ENCODE measurements at regions of chr14 and their contacts with region 1.

Region 1: DNA sequence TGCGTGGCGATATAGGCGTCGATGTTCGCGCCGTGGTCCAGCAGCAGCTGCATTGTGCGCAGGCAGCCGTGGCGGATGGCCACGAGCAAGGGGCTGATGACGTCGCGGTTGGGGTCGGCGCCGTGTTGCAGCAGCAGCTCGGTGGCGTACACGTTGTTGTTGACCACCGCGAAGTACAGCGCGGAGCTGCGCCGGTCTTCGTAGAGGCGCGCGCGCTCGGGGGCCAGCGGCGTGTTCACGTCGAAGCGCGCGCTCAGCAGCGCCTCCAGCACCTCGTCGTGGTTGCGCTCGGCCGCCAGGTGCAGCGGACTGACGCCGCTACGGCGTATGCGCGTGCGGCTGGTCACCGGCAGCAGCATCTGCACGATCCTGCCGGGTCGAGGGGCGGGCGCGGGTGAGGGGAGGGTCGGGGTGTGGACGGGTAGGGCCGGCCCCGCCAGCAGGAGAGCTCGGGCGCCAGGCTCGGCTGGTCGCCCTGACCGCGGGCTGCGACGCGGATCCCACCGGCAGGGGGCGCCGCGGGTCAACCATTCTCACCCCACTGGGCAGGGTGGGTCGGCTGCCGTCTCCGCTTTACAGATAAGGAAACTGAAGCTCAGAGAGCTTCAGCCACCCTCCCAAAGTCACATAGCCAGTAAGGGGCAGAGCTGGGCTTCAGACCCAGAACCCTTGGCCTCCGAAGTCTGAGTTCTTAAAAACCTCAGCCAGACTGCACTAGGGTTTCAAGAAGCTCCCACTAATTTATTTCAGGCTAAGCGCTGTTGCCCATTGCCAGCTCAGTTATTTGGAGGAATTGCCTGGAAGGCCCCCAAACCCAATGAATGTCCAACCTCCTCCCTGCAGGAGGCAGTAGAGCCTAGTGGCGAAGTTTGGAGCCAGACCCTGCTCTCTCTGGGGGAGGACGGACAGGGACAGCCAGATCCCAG is 12.4 kb downstream of the FAM181A start:
- DNase-seq: peak; percentile 92
- H3K4me3 Mint-ChIP-seq: peak overlapping the region; percentile 52
- H3K27ac Mint-ChIP-seq: peak overlapping the region; percentile 68
- H3K4me1 Mint-ChIP-seq: peaks cover 36% of the 10 kb centered on the region
- H3K27me3 Mint-ChIP-seq: no peaks in the 10 kb centered on the region

Region 2: GRCh38 chr14:93888995-93889394 is 50.6 kb before region 1 on chr14:
- CTCF ChIA-PET with region 1: no interaction called
- POLR2A ChIA-PET with region 1: no interaction called
- DNase-seq: no peak
- H3K4me3 Mint-ChIP-seq: no peak overlapping the region
- H3K27ac Mint-ChIP-seq: no peak overlapping the region
- H3K4me1 Mint-ChIP-seq: peaks cover 9% of the 10 kb centered on the region
- H3K27me3 Mint-ChIP-seq: peaks cover 40% of the 10 kb centered on the region

Region 3: GRCh38 chr14:93959239-93960107 is 19.9 kb after region 1 on chr14:
- CTCF ChIA-PET with region 1: interaction called, 88 read pairs
- POLR2A ChIA-PET with region 1: interaction called, 39 read pairs
- DNase-seq: peak; percentile 96
- H3K4me3 Mint-ChIP-seq: peak overlapping the region; percentile 75
- H3K27ac Mint-ChIP-seq: peak overlapping the region; percentile 99
- H3K4me1 Mint-ChIP-seq: peaks cover 96% of the 10 kb centered on the region
- H3K27me3 Mint-ChIP-seq: no peaks in the 10 kb centered on the region

Region 4: GRCh38 chr14:93984987-93985410 is 45.4 kb after region 1 on chr14:
- CTCF ChIA-PET with region 1: interaction called, 354 read pairs
- POLR2A ChIA-PET with region 1: interaction called, 3 read pairs
- DNase-seq: no peak
- H3K4me3 Mint-ChIP-seq: no peak overlapping the region
- H3K27ac Mint-ChIP-seq: no peak overlapping the region
- H3K4me1 Mint-ChIP-seq: peaks cover 5% of the 10 kb centered on the region
- H3K27me3 Mint-ChIP-seq: no peaks in the 10 kb centered on the region

Region 5: GRCh38 chr14:94009767-94010166 is 70.2 kb after region 1 on chr14:
- CTCF ChIA-PET with region 1: interaction called, 300 read pairs
- POLR2A ChIA-PET with region 1: interaction called, 5 read pairs
- DNase-seq: no peak
- H3K4me3 Mint-ChIP-seq: no peak overlapping the region
- H3K27ac Mint-ChIP-seq: peak overlapping the region; percentile 61
- H3K4me1 Mint-ChIP-seq: peaks cover 69% of the 10 kb centered on the region
- H3K27me3 Mint-ChIP-seq: peaks cover 5% of the 10 kb centered on the region

Region 6: GRCh38 chr14:94036313-94037050 is 96.9 kb after region 1 on chr14:
- CTCF ChIA-PET with region 1: interaction called, 22 read pairs
- POLR2A ChIA-PET with region 1: no interaction called
- DNase-seq: peak; percentile 84
- H3K4me3 Mint-ChIP-seq: no peak overlapping the region
- H3K27ac Mint-ChIP-seq: no peak overlapping the region
- H3K4me1 Mint-ChIP-seq: peaks cover 9% of the 10 kb centered on the region
- H3K27me3 Mint-ChIP-seq: no peaks in the 10 kb centered on the region

Region 7: DNA sequence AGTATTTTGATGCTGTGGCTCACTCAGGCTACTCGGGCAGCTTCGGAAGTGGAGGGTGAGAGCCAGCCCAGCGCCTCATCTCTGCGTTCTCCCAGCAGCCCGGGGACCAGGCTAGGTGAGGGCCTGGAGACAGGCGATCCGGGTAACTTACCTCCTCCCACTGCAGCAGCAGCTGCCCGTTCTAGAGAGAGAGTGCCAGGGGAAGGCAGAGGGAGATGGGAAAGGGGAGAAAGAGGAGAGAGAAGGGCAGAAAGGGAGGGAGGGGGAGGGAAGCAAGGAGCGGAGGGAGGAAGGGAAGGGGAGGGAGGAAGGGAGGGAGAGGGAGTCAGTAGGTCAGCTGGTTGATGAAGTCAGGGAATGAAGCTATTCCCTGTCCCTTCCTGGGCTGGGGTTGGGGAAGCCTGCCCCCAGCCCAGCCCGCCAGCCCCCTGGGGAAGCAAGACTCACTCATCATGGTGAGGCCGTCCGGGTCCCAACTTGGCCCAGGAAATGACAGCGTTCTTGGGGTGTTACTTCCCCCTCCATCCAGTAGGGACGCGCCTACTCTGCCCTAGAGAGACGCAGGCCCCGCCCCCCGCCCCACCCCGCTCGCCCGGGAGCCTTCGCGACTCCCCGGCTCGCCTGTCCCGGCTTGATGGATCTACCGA is 189.7 kb after region 1 on chr14 and contains the start of gene IFI27L2:
- CTCF ChIA-PET with region 1: interaction called, 29 read pairs
- POLR2A ChIA-PET with region 1: interaction called, 3 read pairs
- DNase-seq: peak; percentile 81
- H3K4me3 Mint-ChIP-seq: peak within 1 kb of the TSS; percentile 93
- H3K27ac Mint-ChIP-seq: peak within 1 kb of the TSS; percentile 82
- H3K4me1 Mint-ChIP-seq: peaks cover 25% of the 10 kb centered on the region
- H3K27me3 Mint-ChIP-seq: peaks cover 13% of the 10 kb centered on the region
- total RNA-seq, gene IFI27L2: 100 to 102 TPM

Measured in activated CD4-positive, alpha-beta memory T cell treated with anti-CD3 and anti-CD28 coated beads, Interleukin-2, amount 10 ng/mL, durations not matched to agents 7 days and 5 days (primary cell).